Activated T-helper 2 cell treated with anti-CD3 and anti-CD28 coated beads, Interferon-gamma antibody, Interleukin-2, Interleukin-4, amounts not matched to agents 10 μg/mL and 5 μg/mL and 100 μg/mL, durations not matched to agents 14 hours and 24 hours and 36 hours (primary cell): ENCODE measurements at regions of chr4 and their contacts with region 1.

Region 1: DNA sequence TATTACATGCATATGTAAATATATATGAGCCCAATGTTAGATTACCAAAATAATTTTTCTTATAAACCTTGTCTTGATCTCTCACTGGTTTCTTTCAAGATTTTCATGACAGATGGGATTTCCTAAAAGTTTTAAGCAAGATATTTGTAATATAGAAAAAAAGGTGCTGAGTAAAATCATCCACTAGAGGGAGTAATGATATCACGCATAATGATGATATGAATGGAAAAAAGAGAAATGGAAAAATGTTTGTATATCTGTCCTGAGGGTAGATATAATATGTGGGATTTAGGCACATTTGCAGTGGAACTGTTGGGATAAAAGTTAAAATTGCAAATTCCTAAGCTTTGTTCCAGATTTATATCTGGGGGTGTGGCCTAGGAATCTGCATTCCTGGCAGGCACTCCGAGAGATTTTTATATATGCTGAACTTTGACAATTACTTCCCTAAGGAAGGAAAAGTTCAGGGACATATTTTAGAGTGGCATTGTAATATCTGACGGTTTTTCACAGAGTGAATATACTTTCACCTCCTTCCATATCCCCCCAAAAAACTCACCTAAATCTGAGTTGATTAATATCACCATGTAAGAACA is 60.5 kb downstream of the TMA16 start:
- DNase-seq: no peak
- H3K4me3 Mint-ChIP-seq: no peak overlapping the region
- H3K27ac Mint-ChIP-seq: no peak overlapping the region
- H3K4me1 Mint-ChIP-seq: peaks cover 23% of the 10 kb centered on the region
- H3K27me3 Mint-ChIP-seq: peaks cover 1% of the 10 kb centered on the region

Region 2: GRCh38 chr4:163395758-163396157 is 159.2 kb before region 1 on chr4:
- intact Hi-C with region 1: no loop called
- DNase-seq: no peak
- H3K4me3 Mint-ChIP-seq: no peak overlapping the region
- H3K27ac Mint-ChIP-seq: no peak overlapping the region
- H3K4me1 Mint-ChIP-seq: no peaks in the 10 kb centered on the region
- H3K27me3 Mint-ChIP-seq: peaks cover 3% of the 10 kb centered on the region

Region 3: DNA sequence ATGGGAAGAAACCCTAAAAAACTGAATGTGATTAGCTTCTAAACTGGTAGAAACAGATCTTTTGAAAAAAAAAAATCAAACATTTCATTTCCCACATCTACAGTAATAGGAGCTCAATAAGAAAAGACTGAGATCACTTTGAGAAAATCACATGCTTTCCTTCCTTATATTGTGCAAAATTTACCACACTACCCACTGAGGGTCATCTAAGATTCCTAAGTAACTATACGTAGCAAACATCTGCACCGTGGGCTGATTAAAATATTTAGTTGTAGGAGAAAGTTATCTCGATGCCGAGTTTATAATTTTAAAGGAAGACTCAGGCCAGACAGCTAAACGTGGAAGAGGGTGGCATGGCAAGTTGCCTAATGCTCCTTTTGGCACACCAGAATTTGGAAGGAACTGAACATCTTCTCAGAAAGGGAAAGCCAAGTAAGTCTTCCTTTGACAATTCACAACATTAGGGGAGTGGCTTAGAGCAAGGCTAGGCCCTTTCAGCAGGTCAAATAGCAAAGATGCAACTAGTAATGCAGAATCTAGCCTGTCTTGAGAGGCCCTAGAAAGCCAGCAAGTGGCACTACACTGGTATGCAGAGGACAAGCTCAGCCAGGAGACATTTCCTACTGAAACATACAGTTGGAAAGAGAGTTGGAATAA is 67.5 kb after region 1 on chr4:
- intact Hi-C with region 1: no loop called
- DNase-seq: no peak
- H3K4me3 Mint-ChIP-seq: no peak overlapping the region
- H3K27ac Mint-ChIP-seq: no peak overlapping the region
- H3K4me1 Mint-ChIP-seq: no peaks in the 10 kb centered on the region
- H3K27me3 Mint-ChIP-seq: no peaks in the 10 kb centered on the region

Region 4: DNA sequence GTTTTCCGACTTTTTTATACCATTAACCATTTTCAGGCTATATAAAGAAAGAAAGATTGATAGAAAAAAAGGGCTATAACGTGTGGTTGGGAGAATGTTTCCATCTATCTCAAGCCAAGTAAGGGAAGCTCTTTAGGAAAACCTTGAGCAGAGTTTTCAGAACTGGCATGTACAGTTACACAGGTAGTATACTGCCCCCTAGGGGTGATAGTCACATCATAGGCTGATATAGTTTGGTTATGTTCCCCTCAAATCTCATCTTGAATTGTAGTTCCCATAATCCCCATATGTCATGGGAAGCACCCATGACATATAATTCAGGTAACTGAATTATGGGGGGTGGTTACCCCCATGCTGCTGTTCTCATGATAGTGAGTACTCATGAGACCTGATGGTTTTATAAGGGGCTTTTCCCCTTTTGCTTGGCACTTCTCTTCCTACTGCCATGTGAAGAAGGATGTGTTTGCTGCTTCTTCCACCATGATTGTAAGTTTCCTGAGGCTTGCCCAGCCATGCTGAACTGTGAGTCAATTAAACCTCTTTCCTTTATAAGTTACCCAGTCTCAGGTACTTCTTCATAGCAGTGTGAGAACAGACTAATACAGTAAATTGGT is 126.3 kb after region 1 on chr4:
- intact Hi-C with region 1: loop called (anchors 1 kb)
- DNase-seq: no peak
- H3K4me3 Mint-ChIP-seq: no peak overlapping the region
- H3K27ac Mint-ChIP-seq: no peak overlapping the region
- H3K4me1 Mint-ChIP-seq: no peaks in the 10 kb centered on the region
- H3K27me3 Mint-ChIP-seq: no peaks in the 10 kb centered on the region

Region 5: DNA sequence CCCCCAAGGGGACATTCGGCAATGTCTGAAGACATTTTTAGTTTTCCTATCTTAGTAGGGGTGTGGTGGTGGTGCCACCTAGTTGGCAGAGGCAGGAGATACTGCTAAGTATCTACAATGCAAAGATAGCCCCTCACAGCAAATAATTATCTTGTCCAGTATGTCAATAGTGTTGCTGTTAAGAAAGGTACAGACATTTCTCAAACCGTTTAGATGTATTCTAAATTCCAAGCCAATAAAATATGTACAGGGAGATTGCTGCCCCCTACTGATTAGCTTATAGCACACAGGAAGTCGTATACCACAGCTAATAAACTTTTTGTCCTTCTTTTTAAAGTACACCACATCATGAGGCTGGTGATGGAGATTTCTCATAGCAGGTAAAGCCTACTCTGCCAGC is 200.0 kb after region 1 on chr4:
- intact Hi-C with region 1: loop called (anchors 2 kb)
- DNase-seq: no peak
- H3K4me3 Mint-ChIP-seq: no peak overlapping the region
- H3K27ac Mint-ChIP-seq: no peak overlapping the region
- H3K4me1 Mint-ChIP-seq: no peaks in the 10 kb centered on the region
- H3K27me3 Mint-ChIP-seq: no peaks in the 10 kb centered on the region

Region 6: GRCh38 chr4:163878336-163879121 is 323.6 kb after region 1 on chr4:
- intact Hi-C with region 1: no loop called
- DNase-seq: no peak
- H3K4me3 Mint-ChIP-seq: no peak overlapping the region
- H3K27ac Mint-ChIP-seq: no peak overlapping the region
- H3K4me1 Mint-ChIP-seq: no peaks in the 10 kb centered on the region
- H3K27me3 Mint-ChIP-seq: no peaks in the 10 kb centered on the region

Region 7: GRCh38 chr4:164012396-164013027 is 457.5 kb after region 1 on chr4:
- intact Hi-C with region 1: loop called (anchors 10 kb)
- DNase-seq: no peak
- H3K4me3 Mint-ChIP-seq: no peak overlapping the region
- H3K27ac Mint-ChIP-seq: no peak overlapping the region
- H3K4me1 Mint-ChIP-seq: peaks cover 3% of the 10 kb centered on the region
- H3K27me3 Mint-ChIP-seq: no peaks in the 10 kb centered on the region

Region 8: DNA sequence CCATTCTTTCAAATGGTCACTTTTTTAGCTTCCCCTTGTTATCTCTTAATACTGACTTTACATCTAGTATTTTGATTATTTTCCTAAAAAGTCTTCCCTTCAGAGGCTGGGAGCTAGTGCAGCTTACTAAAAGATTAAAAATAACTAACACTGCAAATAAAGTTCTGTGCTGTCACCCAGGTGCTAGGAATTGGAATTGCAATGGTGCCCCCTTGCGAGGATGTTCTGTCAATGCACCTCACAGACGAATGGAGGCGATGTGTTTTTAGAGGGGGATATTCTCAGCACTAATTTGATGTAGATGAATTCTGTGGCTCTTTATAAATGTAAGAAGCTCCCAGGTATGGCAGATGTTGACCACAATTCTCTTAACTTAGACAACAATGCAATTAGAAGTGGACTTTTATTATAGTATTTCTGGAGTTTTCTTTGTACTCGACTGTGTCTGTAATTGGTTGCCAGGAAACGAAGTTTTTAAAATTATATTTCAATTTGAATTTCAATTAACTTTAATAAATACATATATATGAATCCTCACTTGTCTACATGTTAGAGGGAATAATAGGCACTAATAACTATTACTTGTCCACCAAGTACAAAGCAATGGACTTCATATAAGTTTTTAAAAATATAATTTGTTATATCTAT is 1177.0 kb after region 1 on chr4:
- intact Hi-C with region 1: loop called (anchors 10 kb)
- DNase-seq: peak; percentile 15
- H3K4me3 Mint-ChIP-seq: no peak overlapping the region
- H3K27ac Mint-ChIP-seq: no peak overlapping the region
- H3K4me1 Mint-ChIP-seq: no peaks in the 10 kb centered on the region
- H3K27me3 Mint-ChIP-seq: peaks cover 11% of the 10 kb centered on the region